ENCODE measurements at regions of chr2 and their contacts with region 1.

Region 1: DNA sequence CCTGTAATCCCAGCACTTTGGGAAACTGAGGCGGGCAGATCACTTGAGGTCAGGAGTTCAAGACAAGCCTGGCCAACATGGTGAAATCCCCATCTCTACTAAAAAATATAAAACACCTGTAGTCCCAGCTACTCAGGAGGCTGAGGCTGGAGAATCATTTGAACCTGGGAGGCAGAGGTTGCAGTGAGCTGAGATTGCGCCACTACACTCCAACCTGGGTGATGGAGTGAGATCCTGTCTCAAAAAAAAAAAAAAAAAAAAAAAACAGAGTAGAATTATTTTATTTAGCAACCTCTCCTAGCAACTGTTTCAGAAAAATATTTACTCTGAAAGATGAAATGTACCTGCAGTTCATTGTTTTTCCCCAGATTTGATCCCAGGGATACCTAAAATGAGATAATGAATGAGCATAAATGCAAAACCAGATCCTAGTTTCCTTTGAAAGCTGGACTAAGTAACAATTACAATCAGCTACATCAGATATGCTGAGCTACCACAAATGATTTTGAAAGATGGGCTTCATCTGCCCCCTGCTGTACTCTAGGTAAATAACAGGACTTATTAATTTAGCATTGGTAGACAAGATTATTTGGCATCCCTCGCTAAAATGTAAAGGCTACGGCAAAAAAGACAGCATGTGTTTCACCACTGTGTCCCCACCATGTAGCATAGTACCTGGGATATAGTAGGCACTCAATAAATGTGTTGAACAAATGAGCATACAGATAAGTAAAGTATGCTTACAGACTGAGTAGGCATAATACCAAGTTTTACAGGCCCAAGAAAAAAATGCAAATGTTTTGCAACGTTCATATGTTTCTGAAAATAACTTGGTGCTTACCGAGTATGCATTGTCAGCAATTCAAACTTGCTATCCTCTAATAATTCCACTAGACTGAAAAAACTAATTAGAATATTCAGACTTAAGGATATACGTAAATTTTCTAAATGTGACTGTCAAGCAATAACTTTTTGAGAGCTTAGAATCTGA is 102.5 kb downstream of the ATL2 start:
- DNase-seq: peak in 1 of 10 donors; percentile 8

Region 2: DNA sequence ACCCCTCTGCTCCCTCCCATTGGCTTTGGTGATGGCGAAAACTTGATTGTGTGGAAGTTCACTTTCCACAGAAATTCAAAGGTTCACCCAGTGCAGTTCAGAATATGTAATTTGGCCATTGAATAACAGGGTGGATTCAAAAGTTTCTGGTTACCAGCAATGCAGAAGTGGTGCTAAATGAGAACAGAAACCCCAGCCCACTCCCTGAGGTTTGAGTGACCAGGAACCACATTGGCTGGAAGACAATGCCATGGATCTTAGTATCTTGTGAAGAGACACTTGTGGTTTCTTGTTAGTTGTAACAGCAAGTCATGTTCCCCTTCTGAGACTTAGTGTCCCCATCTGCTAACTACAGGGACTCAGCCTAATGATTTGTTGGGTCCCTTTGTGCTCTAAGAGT is 880.3 kb before region 1 on chr2:
- intact Hi-C with region 1: loop called (anchors 1 kb)
- DNase-seq: no peak

Region 3: GRCh38 chr2:37585982-37586621 is 688.5 kb before region 1 on chr2:
- intact Hi-C with region 1: no loop called
- DNase-seq: peak in 4 of 10 donors; percentile 13 to 85 (median 56)

Region 4: DNA sequence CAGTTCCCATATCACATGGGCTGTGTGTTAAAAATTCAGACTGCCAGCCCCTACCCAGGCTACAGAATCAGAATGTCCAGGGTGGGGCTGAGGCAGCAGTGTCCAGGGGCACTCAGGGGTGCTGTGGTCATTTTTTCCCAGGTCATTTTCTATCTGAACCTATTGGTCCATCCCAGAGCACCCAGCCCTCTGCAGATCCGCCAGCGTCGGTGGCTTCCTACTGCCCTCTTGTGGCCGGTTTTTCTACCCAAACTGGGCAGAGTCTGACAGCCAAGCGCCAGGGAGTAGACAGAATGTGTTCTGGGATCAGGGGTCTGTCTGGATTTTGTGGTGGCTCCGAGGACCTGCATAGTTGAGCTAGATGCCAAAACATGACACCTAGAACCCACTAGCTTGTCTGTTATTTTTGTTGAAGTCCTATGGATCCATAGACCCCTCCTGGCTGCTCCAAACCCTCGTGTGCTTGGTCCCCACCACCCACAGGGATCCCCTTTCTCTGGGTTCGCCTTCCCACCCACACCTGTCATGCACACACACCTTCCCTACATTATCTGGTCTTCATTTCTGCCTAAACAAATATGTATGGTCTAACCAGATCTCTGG is 383.6 kb before region 1 on chr2:
- intact Hi-C with region 1: loop called (anchors 10 kb)
- DNase-seq: peak in 9 of 10 donors; percentile 31 to 93 (median 67)

Region 5: DNA sequence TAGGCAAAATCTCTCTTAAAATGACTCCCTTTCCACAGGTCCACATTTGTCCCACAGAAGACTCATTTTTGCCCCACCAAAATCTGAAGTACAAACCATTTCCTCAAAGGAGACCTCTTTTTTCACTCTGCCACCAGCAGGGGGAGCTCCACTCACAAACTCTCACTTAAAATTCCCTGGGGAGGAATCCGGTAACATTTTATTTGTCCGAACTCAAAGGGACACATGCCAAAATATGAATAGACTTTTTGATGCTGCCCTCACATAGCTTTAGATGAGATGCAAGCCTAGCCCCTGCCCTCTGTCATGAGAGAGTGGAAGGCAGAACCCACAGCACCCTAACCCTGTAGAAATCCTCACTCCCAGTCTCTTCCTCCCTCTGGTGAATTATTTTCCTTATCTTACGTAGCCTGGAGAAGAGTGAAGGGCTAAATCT is 292.4 kb before region 1 on chr2:
- intact Hi-C with region 1: loop called (anchors 1 kb)
- DNase-seq: peak in 8 of 10 donors; percentile 21 to 90 (median 62)

Region 6: GRCh38 chr2:38076606-38077430 is 197.8 kb before region 1 on chr2:
- intact Hi-C with region 1: loop called (anchors 1 kb)
- DNase-seq: peak in 5 of 10 donors; percentile 20 to 88 (median 76)